ENCODE measurements at regions of chr6 and their contacts with region 1.

Region 1: DNA sequence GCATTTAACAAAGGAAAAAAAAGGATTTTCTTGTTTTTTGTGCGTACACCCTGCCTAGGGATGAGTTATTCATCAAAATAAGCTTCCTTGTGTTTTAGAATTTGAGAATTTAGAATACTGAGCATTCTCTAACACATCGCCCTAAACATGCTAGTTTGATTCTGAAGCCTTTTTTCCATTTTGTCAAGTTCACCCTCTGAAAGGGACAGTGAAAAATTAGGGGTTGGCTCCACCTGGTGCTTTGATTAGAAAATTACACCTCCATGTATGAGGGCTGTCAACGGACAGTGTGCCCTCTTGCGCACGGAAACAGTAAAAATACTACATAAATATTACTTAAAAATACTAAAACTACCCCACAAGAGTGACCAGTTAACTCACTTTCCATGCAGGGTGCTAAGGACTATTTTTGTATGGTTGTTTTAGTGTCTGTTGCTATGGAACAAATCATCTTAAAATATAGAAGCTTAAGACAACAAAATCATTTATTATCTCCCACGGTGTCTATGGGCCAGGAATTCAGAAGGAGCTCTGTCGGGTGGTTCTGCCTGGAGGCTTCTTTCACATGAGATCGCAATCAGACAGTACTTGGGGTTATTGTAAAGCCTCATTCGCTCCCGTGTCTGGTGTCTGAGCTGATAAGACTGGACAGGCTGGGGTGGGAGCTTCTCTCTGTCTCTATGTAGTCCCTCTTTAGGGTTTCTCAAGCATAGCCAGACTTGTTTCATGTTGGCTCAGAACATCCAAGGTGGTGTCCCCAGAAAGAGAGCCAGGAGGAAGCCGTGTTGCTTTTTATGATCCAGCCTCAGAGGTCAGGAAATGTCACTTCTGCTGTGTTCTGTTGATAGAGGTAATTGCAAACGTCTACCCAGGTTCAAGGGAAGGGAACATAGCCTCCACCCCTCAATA is 41.1 kb upstream of the TMEM170B start:
- DNase-seq: peak; percentile 80
- ATAC-seq: peak; percentile 92
- H3K4me3 Mint-ChIP-seq: no peak overlapping the region
- H3K27ac Mint-ChIP-seq: no peak overlapping the region
- H3K4me1 Mint-ChIP-seq: peaks cover 2% of the 10 kb centered on the region
- H3K27me3 Mint-ChIP-seq: no peaks in the 10 kb centered on the region

Region 2: DNA sequence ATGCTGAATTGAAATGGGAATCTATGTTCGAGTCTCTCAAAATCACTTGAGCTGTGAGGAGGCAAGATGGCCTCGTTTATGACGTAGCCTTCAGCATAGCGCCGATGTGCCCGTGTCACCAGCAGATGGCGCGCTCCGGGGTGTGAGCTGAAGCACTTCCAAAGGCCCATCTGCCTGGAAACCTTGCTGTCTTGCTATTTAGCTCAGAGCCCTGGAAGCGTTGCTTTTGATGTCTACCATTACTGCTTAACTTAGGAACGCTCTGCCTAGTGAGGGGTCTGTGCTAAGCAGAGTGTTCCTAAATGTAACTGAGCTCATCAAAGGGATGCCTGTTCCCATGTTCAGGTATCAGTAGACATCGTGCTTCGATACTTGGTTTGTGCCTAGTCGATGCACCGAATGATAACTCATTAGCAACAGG is 541.8 kb before region 1 on chr6:
- CTCF ChIA-PET with region 1: interaction called, 9 read pairs
- POLR2A ChIA-PET with region 1: no interaction called
- intact Hi-C with region 1: loop called (anchors 2 to 5 kb)
- DNase-seq: peak; percentile 90
- ATAC-seq: peak; percentile 85
- H3K4me3 Mint-ChIP-seq: no peak overlapping the region
- H3K27ac Mint-ChIP-seq: no peak overlapping the region
- H3K4me1 Mint-ChIP-seq: no peaks in the 10 kb centered on the region
- H3K27me3 Mint-ChIP-seq: peaks cover 18% of the 10 kb centered on the region

Region 3: GRCh38 chr6:11033825-11034224 is 462.6 kb before region 1 on chr6:
- CTCF ChIA-PET with region 1: no interaction called
- POLR2A ChIA-PET with region 1: no interaction called
- intact Hi-C with region 1: no loop called
- DNase-seq: no peak
- ATAC-seq: no peak
- H3K4me3 Mint-ChIP-seq: no peak overlapping the region
- H3K27ac Mint-ChIP-seq: no peak overlapping the region
- H3K4me1 Mint-ChIP-seq: no peaks in the 10 kb centered on the region
- H3K27me3 Mint-ChIP-seq: peaks cover 42% of the 10 kb centered on the region

Region 4: GRCh38 chr6:11139056-11139960 is 357.1 kb before region 1 on chr6:
- CTCF ChIA-PET with region 1: interaction called, 59 read pairs
- POLR2A ChIA-PET with region 1: no interaction called
- intact Hi-C with region 1: loop called (anchors 1 kb)
- DNase-seq: no peak
- ATAC-seq: peak; percentile 80
- H3K4me3 Mint-ChIP-seq: no peak overlapping the region
- H3K27ac Mint-ChIP-seq: peak overlapping the region; percentile 1
- H3K4me1 Mint-ChIP-seq: peaks cover 17% of the 10 kb centered on the region
- H3K27me3 Mint-ChIP-seq: no peaks in the 10 kb centered on the region

Region 5: GRCh38 chr6:11172501-11173332 is 323.7 kb before region 1 on chr6:
- CTCF ChIA-PET with region 1: interaction called, 35 read pairs
- POLR2A ChIA-PET with region 1: no interaction called
- intact Hi-C with region 1: loop called (anchors 1 kb)
- DNase-seq: peak; percentile 87
- ATAC-seq: peak; percentile 76
- H3K4me3 Mint-ChIP-seq: no peak overlapping the region
- H3K27ac Mint-ChIP-seq: no peak overlapping the region
- H3K4me1 Mint-ChIP-seq: peaks cover 13% of the 10 kb centered on the region
- H3K27me3 Mint-ChIP-seq: no peaks in the 10 kb centered on the region

Region 6: DNA sequence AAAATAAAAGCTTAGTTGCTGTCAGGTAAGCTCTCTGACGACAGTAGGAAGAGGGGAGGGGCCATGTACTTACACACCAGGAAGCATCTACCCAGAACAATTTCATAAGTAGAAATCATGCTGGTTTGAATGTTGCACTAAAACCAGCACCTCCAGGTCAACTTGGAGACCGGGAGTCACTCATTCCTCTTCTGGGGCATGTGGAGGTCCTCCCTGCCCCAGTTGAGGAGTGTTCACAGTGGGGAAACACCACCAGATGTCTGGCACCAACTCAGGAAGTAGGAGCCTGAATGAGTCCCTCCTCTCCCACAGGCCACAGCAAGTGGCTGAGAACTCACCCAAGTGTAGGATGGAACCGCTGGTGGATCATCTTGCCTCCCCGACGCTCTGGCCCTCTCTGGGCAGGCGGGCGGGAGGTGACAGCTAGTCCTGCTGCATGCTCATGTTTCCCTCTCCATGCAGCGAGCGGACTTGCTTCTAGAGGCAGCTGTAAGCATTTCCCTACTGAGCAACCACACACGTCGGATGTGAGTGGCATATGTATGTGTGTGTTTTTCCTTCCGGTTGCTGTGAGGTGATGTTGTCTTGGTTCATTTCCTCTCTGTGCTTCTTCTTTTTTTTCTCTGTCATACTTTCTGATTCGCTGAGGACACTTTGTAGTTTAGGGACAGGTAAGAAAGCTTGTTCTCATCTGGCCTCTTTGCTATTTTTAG is 114.4 kb before region 1 on chr6:
- CTCF ChIA-PET with region 1: interaction called, 12 read pairs
- POLR2A ChIA-PET with region 1: no interaction called
- intact Hi-C with region 1: no loop called
- DNase-seq: peak; percentile 80
- ATAC-seq: peak; percentile 93
- H3K4me3 Mint-ChIP-seq: peak overlapping the region; percentile 78
- H3K27ac Mint-ChIP-seq: peak overlapping the region; percentile 88
- H3K4me1 Mint-ChIP-seq: peaks cover 56% of the 10 kb centered on the region
- H3K27me3 Mint-ChIP-seq: peaks cover 2% of the 10 kb centered on the region

Region 7: GRCh38 chr6:11480541-11480940 is 15.9 kb before region 1 on chr6:
- CTCF ChIA-PET with region 1: interaction called, 10 read pairs
- POLR2A ChIA-PET with region 1: no interaction called
- intact Hi-C with region 1: no loop called
- DNase-seq: no peak
- ATAC-seq: no peak
- H3K4me3 Mint-ChIP-seq: no peak overlapping the region
- H3K27ac Mint-ChIP-seq: no peak overlapping the region
- H3K4me1 Mint-ChIP-seq: no peaks in the 10 kb centered on the region
- H3K27me3 Mint-ChIP-seq: peaks cover 6% of the 10 kb centered on the region